A549 (cell line): ENCODE measurements at regions of chr1 and their contacts with region 1.

Region 1: DNA sequence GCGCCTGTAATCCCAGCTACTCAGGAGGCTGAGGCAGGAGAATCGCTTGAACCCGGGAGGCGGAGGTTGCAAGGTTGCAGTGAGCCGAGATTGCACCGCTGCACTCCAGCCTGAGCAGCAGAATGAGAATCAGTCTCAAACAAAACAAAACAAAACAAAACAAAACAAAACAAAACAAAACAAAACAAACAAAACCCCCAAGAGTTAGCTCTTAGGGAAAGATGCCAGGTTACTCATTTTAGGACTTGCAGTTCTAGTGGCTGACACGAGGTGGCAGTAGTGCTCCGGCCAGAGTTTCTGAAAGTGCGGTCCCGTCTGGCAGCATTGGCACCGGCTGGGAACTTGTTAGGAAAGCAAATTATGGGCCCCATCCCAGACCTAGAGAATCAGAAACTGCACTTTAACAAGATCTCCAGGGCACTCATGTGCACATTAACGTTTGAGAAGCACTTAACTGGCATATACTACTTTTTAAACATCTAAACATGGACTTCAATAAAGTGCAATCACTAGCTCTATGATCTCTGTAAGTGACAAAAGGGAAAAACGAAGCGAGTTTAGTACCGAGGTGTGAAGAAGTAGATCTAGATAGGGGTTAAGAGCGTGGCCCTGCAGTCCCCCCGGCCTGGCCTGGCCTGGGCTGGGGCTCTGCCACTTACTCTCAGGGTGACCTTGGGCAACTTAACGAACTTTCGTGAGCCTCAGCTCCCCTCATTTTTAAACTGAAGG is 41.9 kb upstream of the TNFRSF1B start:
- DNase-seq: peak; percentile 24 to 53
- ATAC-seq: peak; percentile 46 to 75; a peak in 4 of 6 replicates
- H3K4me3 ChIP-seq: no peak overlapping the region
- H3K27ac ChIP-seq: no peak overlapping the region
- H3K4me1 ChIP-seq: no peaks in the 10 kb centered on the region
- CTCF ChIP-seq: peak; percentile 84
- EP300 ChIP-seq: no peak
- POLR2A ChIP-seq: no peak
- RAD21 ChIP-seq: peak; percentile 91 to 94

Region 2: GRCh38 chr1:12113433-12114339 is 11.2 kb before region 1 on chr1:
- CTCF ChIA-PET with region 1: interaction called, 17 read pairs
- POLR2A ChIA-PET with region 1: no interaction called
- DNase-seq: no peak
- ATAC-seq: no peak
- H3K4me3 ChIP-seq: no peak overlapping the region
- H3K27ac ChIP-seq: no peak overlapping the region
- H3K4me1 ChIP-seq: no peaks in the 10 kb centered on the region
- CTCF ChIP-seq: no peak
- EP300 ChIP-seq: no peak
- POLR2A ChIP-seq: no peak
- RAD21 ChIP-seq: no peak

Region 3: DNA sequence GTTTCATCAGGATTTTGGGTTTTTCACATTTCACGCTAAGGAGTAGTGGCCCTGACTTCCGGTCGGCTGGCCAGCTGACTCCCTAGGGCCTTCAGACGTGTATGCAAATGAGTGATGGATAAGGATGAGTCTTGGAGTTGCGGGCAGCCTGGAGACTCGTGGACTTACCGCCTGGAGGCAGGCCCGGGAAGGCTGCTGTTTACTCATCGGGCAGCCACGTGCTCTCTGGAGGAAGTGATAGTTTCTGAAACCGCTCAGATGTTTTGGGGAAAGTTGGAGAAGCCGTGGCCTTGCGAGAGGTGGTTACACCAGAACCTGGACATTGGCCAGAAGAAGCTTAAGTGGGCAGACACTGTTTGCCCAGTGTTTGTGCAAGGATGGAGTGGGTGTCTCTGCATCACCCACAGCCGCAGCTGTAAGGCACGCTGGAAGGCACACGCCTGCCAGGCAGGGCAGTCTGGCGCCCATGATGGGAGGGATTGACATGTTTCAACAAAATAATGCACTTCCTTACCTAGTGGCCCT is 18.8 kb after region 1 on chr1:
- CTCF ChIA-PET with region 1: interaction called, 48 read pairs
- POLR2A ChIA-PET with region 1: no interaction called
- DNase-seq: peak in 1 of 2 experiments; percentile 14
- ATAC-seq: peak; percentile 22 to 58; a peak in 4 of 6 replicates
- H3K4me3 ChIP-seq: no peak overlapping the region
- H3K27ac ChIP-seq: no peak overlapping the region
- H3K4me1 ChIP-seq: peaks cover 4% of the 10 kb centered on the region; the same call in 2 of the 3 replicates
- CTCF ChIP-seq: no peak
- EP300 ChIP-seq: no peak
- POLR2A ChIP-seq: no peak
- RAD21 ChIP-seq: no peak

Region 4: DNA sequence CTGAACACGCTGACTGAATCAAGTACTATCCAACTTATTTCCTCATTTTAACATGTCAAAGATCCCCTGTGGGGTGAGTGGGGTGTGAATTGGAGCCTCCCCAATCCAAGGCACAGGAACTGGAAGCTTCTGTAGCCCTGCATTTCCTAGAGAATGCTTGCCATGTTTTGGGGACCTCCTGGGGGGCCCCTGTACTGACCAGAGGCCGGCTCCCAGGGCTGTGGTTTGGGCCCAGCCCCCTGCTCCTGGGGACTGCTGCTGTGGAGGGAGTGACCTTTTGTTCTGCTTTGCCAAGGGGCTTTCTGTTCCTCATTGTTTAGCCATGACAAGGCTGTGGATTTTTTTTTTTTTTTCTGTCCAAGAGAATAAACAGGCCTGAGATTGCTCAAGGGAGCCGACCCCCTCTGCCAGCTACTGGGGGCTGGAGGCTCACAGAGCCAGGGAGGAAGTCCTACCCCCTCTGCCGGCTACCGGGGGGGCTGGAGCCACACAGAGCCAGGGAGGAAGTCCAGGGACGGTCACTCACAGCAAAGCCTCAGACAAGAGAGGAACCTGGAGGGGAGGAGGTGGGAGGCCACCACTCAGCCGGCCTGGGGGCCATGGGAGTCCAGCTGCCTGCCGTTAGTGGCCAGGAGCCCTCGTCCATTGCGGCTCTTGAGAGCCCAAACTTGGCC is 59.3 kb after region 1 on chr1:
- CTCF ChIA-PET with region 1: interaction called, 19 read pairs
- POLR2A ChIA-PET with region 1: no interaction called
- DNase-seq: no peak
- ATAC-seq: peak in 1 of 2 experiments; percentile 41; a peak in 3 of 6 replicates
- H3K4me3 ChIP-seq: no peak overlapping the region
- H3K27ac ChIP-seq: peak overlapping the region in 1 of 2 experiments; percentile 73; a peak in 3 of 6 replicates
- H3K4me1 ChIP-seq: peaks cover 6% of the 10 kb centered on the region; the same call in 2 of the 3 replicates
- CTCF ChIP-seq: no peak
- EP300 ChIP-seq: no peak
- POLR2A ChIP-seq: no peak
- RAD21 ChIP-seq: no peak

Region 5: GRCh38 chr1:12196641-12197482 is 72.0 kb after region 1 on chr1:
- CTCF ChIA-PET with region 1: interaction called, 78 read pairs
- POLR2A ChIA-PET with region 1: no interaction called
- DNase-seq: no peak
- ATAC-seq: no peak
- H3K4me3 ChIP-seq: no peak overlapping the region
- H3K27ac ChIP-seq: no peak overlapping the region
- H3K4me1 ChIP-seq: no peaks in the 10 kb centered on the region
- CTCF ChIP-seq: no peak
- EP300 ChIP-seq: no peak
- POLR2A ChIP-seq: no peak
- RAD21 ChIP-seq: no peak

Region 6: GRCh38 chr1:12215118-12215961 is 90.5 kb after region 1 on chr1:
- CTCF ChIA-PET with region 1: interaction called, 229 read pairs
- POLR2A ChIA-PET with region 1: no interaction called
- DNase-seq: no peak
- ATAC-seq: no peak
- H3K4me3 ChIP-seq: no peak overlapping the region
- H3K27ac ChIP-seq: no peak overlapping the region
- H3K4me1 ChIP-seq: no peaks in the 10 kb centered on the region
- CTCF ChIP-seq: no peak
- EP300 ChIP-seq: no peak
- POLR2A ChIP-seq: no peak
- RAD21 ChIP-seq: no peak

Region 7: GRCh38 chr1:12275369-12275768 is 150.5 kb after region 1 on chr1:
- CTCF ChIA-PET with region 1: interaction called, 12 read pairs
- POLR2A ChIA-PET with region 1: no interaction called
- DNase-seq: peak; percentile 27 to 35
- ATAC-seq: peak; percentile 70 to 80; a peak in 4 of 6 replicates
- H3K4me3 ChIP-seq: no peak overlapping the region
- H3K27ac ChIP-seq: no peak overlapping the region
- H3K4me1 ChIP-seq: peaks cover 5% of the 10 kb centered on the region; the same call in 1 of the 3 replicates
- CTCF ChIP-seq: peak; percentile 58
- EP300 ChIP-seq: no peak
- POLR2A ChIP-seq: no peak
- RAD21 ChIP-seq: peak; percentile 42 to 55; a peak in 4 of 5 replicates